ENCODE measurements at regions of chr4 and their contacts with region 1.

Region 1: GRCh38 chr4:147693218-147693617 is 9.3 kb upstream of the PRMT9 start:
- DNase-seq: no peak
- ATAC-seq: no peak
- H3K4me3 ChIP-seq: no peak overlapping the region
- H3K27ac ChIP-seq: no peak overlapping the region
- H3K4me1 ChIP-seq: no peaks in the 10 kb centered on the region
- H3K27me3 ChIP-seq: peaks cover 15 to 17% of the 10 kb centered on the region in 2 experiments; a peak in 4 of 5 replicates
- CTCF ChIP-seq: no peak
- EP300 ChIP-seq: no peak
- POLR2A ChIP-seq: no peak
- RAD21 ChIP-seq: no peak

Region 2: DNA sequence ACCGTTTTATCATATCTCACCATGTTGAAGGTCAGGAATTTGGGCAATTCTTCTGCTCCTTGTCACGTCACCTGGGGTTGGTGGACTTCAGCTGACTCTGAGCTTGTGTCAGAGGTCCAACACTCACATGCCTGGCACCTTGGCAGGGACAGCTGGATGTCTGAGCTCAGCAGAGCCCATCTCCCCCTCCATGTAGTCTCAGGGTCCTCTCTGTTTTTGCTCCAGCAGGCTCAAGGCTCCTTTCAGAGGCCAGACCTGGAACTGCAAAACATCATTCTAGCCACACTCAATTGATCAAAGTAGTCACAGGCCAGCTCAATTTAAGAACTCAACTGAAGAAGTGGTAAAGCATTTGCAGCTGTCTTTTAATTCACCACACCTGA is 167.0 kb before region 1 on chr4:
- CTCF ChIA-PET with region 1: no interaction called
- POLR2A ChIA-PET with region 1: no interaction called
- in situ Hi-C with region 1: no loop called
- intact Hi-C with region 1: loop called (anchors 10 kb)
- DNase-seq: no peak
- ATAC-seq: no peak
- H3K4me3 ChIP-seq: no peak overlapping the region
- H3K27ac ChIP-seq: no peak overlapping the region
- H3K4me1 ChIP-seq: no peaks in the 10 kb centered on the region
- H3K27me3 ChIP-seq: no peaks in the 10 kb centered on the region
- CTCF ChIP-seq: no peak
- EP300 ChIP-seq: no peak
- POLR2A ChIP-seq: no peak
- RAD21 ChIP-seq: no peak

Region 3: DNA sequence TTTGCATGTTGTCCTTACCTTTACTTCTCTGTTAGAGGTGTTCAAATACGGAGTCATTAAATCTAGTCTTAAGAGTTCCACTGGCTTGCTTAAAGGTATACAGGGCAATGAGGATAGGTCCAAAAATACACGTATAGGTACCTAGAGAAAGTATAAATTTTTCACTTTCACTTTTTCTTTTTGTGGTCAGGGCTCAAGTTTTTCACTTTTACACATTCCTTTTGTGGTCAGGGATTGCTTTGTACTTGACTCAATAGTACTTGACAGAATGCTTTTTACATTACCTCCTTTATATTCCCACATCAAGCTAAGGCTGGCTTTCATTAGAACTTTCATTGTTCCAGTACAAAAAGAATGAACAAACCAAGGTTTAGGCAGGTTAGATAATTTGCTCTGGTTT is 54.3 kb before region 1 on chr4:
- CTCF ChIA-PET with region 1: no interaction called
- POLR2A ChIA-PET with region 1: no interaction called
- in situ Hi-C with region 1: no loop called
- intact Hi-C with region 1: no loop called
- DNase-seq: no peak
- ATAC-seq: no peak
- H3K4me3 ChIP-seq: no peak overlapping the region
- H3K27ac ChIP-seq: no peak overlapping the region
- H3K4me1 ChIP-seq: no peaks in the 10 kb centered on the region
- H3K27me3 ChIP-seq: no peaks in the 10 kb centered on the region
- CTCF ChIP-seq: no peak
- EP300 ChIP-seq: no peak
- POLR2A ChIP-seq: no peak
- RAD21 ChIP-seq: no peak

Region 4: DNA sequence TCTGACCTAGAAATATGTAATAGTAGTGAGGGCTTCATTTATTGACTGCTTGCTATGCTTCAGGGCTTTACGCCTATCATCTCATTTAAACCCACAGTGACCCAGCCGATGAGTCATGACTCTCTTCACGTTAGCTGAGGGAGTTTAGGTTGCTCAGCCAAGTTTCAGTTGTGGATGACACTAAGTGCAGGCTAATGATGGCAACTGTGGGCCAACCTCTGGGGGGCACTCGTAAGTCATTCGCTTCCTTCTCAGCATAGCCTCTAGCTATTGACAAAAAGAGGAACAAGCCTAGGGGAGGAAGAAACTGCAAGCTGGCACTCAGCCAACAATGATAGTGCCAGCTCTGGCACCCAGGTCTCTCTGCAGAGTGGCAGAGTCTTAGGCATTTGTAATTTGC is 363.7 kb after region 1 on chr4:
- CTCF ChIA-PET with region 1: no interaction called
- POLR2A ChIA-PET with region 1: no interaction called
- in situ Hi-C with region 1: no loop called
- intact Hi-C with region 1: no loop called
- DNase-seq: peak; percentile 20 to 42 (median 22)
- ATAC-seq: peak; percentile 93
- H3K4me3 ChIP-seq: no peak overlapping the region
- H3K27ac ChIP-seq: no peak overlapping the region
- H3K4me1 ChIP-seq: no peaks in the 10 kb centered on the region
- H3K27me3 ChIP-seq: peaks cover 2% of the 10 kb centered on the region in 2 experiments; a peak in 2 of 5 replicates
- CTCF ChIP-seq: peak; percentile 46 to 62 (median 53); a peak in 5 of 6 replicates
- EP300 ChIP-seq: no peak
- POLR2A ChIP-seq: no peak
- RAD21 ChIP-seq: peak; percentile 28 to 43; a peak in 2 of 4 replicates

Measured in K562 (cell line).